ENCODE measurements at regions of chr16 and their contacts with region 1.

Region 1: DNA sequence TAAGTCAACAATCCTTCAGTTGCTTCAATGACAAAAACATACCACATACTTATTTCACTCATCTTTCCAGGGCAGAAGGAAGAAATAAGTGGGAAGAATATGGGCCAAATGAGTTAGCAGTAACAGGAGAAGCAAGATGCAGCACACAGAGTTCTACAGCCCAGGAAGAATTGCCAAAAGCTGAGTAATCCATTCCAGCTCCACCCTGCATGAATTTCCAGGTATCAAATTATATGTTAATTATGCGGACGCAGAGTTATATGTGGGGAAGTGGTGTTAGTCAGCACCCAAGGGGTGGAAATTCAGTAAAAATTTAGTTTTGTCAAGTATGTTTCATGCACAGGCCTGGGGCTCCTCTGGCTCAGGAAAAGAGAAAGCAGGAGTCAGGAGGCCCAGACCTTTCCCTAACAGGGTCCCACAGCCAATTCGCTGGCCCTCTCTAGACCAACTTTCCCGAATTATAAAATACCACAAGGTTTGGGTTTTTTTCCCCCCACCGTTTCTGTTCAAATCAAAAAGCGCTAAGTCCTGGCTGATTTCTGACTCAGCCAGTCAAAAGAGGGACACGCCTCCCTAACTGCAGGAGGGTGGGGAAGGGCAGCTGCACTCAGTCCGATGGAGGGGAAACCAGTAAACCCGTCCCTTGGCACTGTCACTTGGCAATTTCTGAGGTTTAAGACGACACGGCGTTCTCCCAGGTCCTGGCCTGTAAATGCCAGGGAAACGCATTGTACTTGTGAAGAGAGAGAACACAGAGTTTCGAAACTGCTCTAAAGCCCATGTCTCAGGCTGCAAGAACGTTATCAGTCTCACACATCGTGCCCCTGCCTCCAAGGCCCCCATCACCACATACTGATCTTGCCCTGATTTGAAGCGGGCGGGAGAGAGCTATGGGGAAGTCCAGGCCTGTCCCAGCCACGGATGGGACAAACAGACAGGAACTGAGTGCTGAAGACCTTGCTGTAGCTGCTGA is 58.1 kb downstream of the ZFHX3 start:
- DNase-seq: peak; percentile 86 to 95
- ATAC-seq: peak; percentile 75 to 82 (median 78)
- H3K4me3 ChIP-seq: peak overlapping the region; percentile 61
- H3K27ac ChIP-seq: peak overlapping the region; percentile 97
- H3K4me1 ChIP-seq: peaks cover 78% of the 10 kb centered on the region
- H3K27me3 ChIP-seq: no peaks in the 10 kb centered on the region
- CTCF ChIP-seq: no peak

Region 2: DNA sequence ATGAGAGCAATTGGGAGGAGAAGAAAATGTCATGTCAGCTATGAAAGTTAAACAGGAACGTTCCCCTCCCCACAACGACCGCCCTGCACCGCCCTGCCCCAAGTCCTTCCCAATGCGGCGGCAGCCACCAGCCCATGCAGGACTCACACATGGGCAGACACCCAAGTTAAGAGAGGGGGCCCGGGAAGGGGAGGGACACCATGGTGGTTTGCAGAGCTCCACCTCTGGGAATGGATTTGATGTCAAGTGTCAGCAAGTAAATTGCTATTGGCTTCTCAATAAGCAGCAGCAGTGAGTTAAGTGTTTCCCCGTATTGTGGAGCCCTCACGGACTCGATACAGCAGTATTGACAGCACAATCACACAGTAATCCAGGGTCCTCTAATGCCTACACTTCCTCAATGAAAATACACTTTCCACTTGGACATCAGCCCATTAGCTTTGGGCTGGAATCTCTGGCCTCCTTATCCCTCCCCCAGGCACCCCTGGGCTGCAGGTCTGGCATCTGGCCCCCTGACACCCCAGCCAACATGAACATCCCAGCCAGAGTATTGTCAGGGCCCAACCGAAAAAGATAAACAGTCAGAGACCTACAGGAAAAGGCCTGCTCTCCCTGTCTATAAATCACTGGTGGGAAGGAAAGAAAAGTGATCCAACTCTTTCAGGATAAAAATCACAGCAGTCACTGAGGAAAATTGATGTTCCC is 35.4 kb after region 1 on chr16:
- intact Hi-C with region 1: loop called (anchors 5 kb)
- DNase-seq: peak in 1 of 2 donors; percentile 32
- ATAC-seq: no peak
- H3K4me3 ChIP-seq: no peak overlapping the region
- H3K27ac ChIP-seq: peak overlapping the region; percentile 78
- H3K4me1 ChIP-seq: peaks cover 86% of the 10 kb centered on the region
- H3K27me3 ChIP-seq: no peaks in the 10 kb centered on the region
- CTCF ChIP-seq: no peak

Measured in psoas muscle (tissue), 8 donors.